CD8-positive, alpha-beta T cell (primary cell): ENCODE measurements at regions of chr16 and their contacts with region 1.

Region 1: DNA sequence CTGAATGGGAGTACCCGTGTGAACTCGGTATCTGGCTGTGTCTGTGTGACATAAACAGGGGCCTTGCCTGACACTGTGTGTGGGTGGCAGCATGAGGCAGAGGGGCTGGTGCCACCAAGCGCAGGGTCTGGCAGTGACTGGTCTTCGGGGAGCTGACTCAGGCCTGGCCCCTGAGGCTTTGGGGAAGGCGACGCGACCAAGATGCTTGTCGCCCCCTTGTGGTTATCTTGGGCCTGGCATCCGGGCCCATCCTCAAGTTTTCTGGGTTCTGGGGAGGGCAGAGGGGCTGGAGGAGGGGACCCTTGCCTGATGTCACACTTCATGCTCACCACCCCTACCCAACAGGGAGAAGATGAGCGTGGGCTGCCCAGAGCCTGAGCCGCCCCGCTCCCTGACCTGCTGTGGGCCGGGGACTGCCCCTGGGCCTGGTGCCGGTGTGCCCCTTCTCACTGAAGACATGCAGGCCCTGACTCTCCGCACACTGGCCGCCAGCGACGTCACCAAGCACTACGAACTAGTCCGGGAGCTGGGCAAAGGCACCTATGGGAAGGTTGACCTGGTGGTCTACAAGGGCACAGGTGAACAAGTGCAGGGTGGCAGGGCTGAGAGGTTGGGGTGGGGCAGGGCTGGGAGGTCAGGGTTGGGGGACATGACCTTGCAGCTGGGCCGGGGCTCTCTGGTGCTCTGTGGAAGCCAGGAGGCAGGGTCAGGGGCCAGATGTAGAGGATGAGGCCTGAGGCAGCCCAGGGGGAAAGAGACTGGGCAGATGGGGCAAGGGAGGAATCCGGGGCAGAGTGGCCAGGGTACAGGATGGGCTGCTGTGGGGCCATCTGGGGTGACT is 24.9 kb downstream of the SBK1 start:
- DNase-seq: peak; percentile 48 to 86 (median 77)
- ATAC-seq: peak; percentile 78
- H3K4me3 ChIP-seq: no peak overlapping the region
- H3K4me3 Mint-ChIP-seq: peak overlapping the region; percentile 41
- H3K27ac ChIP-seq: peak overlapping the region in 1 of 2 experiments; percentile 42
- H3K27ac Mint-ChIP-seq: peak overlapping the region; percentile 84
- H3K4me1 ChIP-seq: peaks cover 48% of the 10 kb centered on the region
- H3K4me1 Mint-ChIP-seq: peaks cover 43% of the 10 kb centered on the region
- H3K27me3 ChIP-seq: no peaks in the 10 kb centered on the region
- H3K27me3 Mint-ChIP-seq: no peaks in the 10 kb centered on the region
- CTCF ChIP-seq: peak; percentile 76

Region 2: DNA sequence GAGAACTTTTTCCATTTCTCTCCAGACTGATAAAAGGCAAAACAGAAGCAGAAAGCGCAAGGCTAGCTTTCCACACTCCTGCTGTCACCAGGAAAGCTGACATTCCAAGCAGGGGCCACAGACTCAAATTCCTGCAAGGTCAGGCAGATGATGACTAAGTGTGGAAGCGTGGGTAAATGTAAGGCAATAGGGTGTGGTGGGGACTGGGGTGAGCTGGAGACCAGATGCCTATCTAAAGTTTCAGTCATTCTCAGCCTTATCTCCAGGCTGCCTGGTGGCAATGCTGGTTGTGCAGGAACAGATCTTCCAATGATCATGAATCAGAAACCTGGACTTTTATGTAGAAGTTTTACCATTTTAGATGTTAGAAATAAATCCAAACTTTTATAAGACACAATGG is 477.8 kb before region 1 on chr16:
- CTCF ChIA-PET with region 1: no interaction called
- POLR2A ChIA-PET with region 1: no interaction called
- intact Hi-C with region 1: no loop called
- DNase-seq: no peak
- ATAC-seq: no peak
- H3K4me3 ChIP-seq: no peak overlapping the region
- H3K4me3 Mint-ChIP-seq: no peak overlapping the region
- H3K27ac ChIP-seq: no peak overlapping the region
- H3K27ac Mint-ChIP-seq: no peak overlapping the region
- H3K4me1 ChIP-seq: no peaks in the 10 kb centered on the region
- H3K4me1 Mint-ChIP-seq: no peaks in the 10 kb centered on the region
- H3K27me3 ChIP-seq: peaks cover 0 to 4% of the 10 kb centered on the region in 2 experiments
- H3K27me3 Mint-ChIP-seq: peaks cover 40% of the 10 kb centered on the region
- CTCF ChIP-seq: no peak

Region 3: GRCh38 chr16:27972500-27972899 is 344.8 kb before region 1 on chr16:
- CTCF ChIA-PET with region 1: no interaction called
- POLR2A ChIA-PET with region 1: no interaction called
- intact Hi-C with region 1: loop called in 1 of 2 experiments (anchors 5 kb)
- DNase-seq: peak in 6 of 9 experiments; percentile 2 to 66 (median 29)
- ATAC-seq: peak; percentile 23
- H3K4me3 ChIP-seq: no peak overlapping the region
- H3K4me3 Mint-ChIP-seq: no peak overlapping the region
- H3K27ac ChIP-seq: no peak overlapping the region
- H3K27ac Mint-ChIP-seq: no peak overlapping the region
- H3K4me1 ChIP-seq: no peaks in the 10 kb centered on the region
- H3K4me1 Mint-ChIP-seq: peaks cover 3% of the 10 kb centered on the region
- H3K27me3 ChIP-seq: no peaks in the 10 kb centered on the region
- H3K27me3 Mint-ChIP-seq: peaks cover 27% of the 10 kb centered on the region
- CTCF ChIP-seq: peak; percentile 37

Region 4: GRCh38 chr16:28218104-28218503 is 99.2 kb before region 1 on chr16:
- CTCF ChIA-PET with region 1: interaction called, 14 read pairs
- POLR2A ChIA-PET with region 1: no interaction called
- intact Hi-C with region 1: loop called in 1 of 2 experiments (anchors 5 kb)
- DNase-seq: peak; percentile 40 to 89 (median 65)
- ATAC-seq: peak; percentile 100
- H3K4me3 ChIP-seq: no peak overlapping the region
- H3K4me3 Mint-ChIP-seq: no peak overlapping the region
- H3K27ac ChIP-seq: no peak overlapping the region
- H3K27ac Mint-ChIP-seq: peak overlapping the region; percentile 71
- H3K4me1 ChIP-seq: no peaks in the 10 kb centered on the region
- H3K4me1 Mint-ChIP-seq: peaks cover 5% of the 10 kb centered on the region
- H3K27me3 ChIP-seq: no peaks in the 10 kb centered on the region
- H3K27me3 Mint-ChIP-seq: no peaks in the 10 kb centered on the region
- CTCF ChIP-seq: peak; percentile 66

Region 5: DNA sequence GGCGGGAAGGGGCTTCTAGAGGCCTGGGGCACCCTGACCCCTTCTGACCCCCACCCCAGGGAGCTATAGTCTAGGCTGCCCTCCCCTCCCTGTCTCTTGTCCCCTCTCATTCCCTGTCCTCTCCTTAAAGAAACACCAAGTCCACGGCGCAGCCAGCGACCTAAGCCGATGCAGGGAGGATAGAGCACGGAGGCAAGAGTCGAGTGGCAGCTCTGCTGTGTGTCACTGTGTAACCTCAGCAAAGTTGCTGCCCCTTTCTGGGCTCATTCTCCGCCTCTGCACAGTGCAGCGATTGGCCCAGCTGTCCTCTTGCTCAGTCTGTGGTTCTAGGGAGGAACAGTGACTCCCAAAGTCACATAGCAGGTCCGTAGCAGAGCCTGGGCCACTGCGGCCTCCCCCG is 61.4 kb before region 1 on chr16:
- CTCF ChIA-PET with region 1: no interaction called
- POLR2A ChIA-PET with region 1: no interaction called
- intact Hi-C with region 1: no loop called
- DNase-seq: no peak
- ATAC-seq: no peak
- H3K4me3 ChIP-seq: no peak overlapping the region
- H3K4me3 Mint-ChIP-seq: no peak overlapping the region
- H3K27ac ChIP-seq: no peak overlapping the region
- H3K27ac Mint-ChIP-seq: no peak overlapping the region
- H3K4me1 ChIP-seq: peaks cover 21% of the 10 kb centered on the region
- H3K4me1 Mint-ChIP-seq: peaks cover 9% of the 10 kb centered on the region
- H3K27me3 ChIP-seq: no peaks in the 10 kb centered on the region
- H3K27me3 Mint-ChIP-seq: no peaks in the 10 kb centered on the region
- CTCF ChIP-seq: no peak

Region 6: DNA sequence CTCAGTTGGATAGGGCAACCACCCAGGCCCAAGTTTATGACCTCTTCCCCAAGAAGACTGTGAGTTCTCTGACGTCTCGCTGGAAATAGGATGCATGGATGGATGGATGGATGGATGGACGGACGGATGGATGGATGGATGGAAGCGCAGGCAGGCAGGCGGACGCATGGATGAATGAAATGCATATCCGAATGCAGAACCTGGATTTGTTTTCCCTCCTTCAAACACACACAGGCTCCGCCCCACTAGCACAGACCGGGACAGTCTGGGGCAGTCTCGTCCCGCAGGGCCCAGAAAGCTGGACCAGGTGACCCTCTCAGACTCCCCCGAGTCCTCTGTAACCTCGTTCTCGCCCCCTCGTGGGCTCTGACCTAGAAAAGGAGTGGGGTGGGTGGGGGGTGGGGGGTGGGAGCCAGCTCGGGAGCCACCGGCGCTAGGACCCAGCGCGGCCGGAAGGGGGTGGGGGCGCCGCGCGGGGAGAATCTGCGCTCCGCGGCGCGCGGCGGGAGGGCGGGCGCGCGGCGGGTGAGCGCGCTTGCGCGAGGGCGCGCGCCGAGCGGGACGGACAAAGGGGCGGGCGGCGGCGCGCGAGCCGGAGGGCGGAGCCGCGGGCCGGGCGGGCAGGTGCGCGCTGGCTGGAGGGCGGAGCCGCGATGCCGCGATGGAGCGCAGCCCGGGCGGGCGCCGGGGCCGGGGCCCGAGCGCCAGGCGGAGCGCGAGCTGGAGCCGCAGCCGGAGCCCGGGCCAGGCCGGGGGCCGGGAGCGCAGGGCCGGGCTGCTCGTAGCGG is 25.2 kb before region 1 on chr16 and contains the start of gene SBK1:
- CTCF ChIA-PET with region 1: interaction called, 431 read pairs
- POLR2A ChIA-PET with region 1: interaction called, 123 read pairs
- intact Hi-C with region 1: loop called in 1 of 2 experiments (anchors 1 kb)
- DNase-seq: peak; percentile 68 to 94 (median 84)
- ATAC-seq: peak; percentile 90
- H3K4me3 ChIP-seq: peak within 1 kb of the TSS; percentile 82 to 92
- H3K4me3 Mint-ChIP-seq: peak within 1 kb of the TSS; percentile 94
- H3K27ac ChIP-seq: peak within 1 kb of the TSS; percentile 56 to 75
- H3K27ac Mint-ChIP-seq: peak within 1 kb of the TSS; percentile 93
- H3K4me1 ChIP-seq: peaks cover 74% of the 10 kb centered on the region
- H3K4me1 Mint-ChIP-seq: peaks cover 67% of the 10 kb centered on the region
- H3K27me3 ChIP-seq: no peaks in the 10 kb centered on the region
- H3K27me3 Mint-ChIP-seq: no peaks in the 10 kb centered on the region
- CTCF ChIP-seq: no peak
- total RNA-seq, gene SBK1: 16.5 to 17.1 TPM

Region 7: GRCh38 chr16:28297784-28298510 is 19.3 kb before region 1 on chr16:
- CTCF ChIA-PET with region 1: interaction called, 85 read pairs
- POLR2A ChIA-PET with region 1: interaction called, 123 read pairs
- intact Hi-C with region 1: no loop called
- DNase-seq: peak in 3 of 9 experiments; percentile 22 to 50 (median 40)
- ATAC-seq: peak; percentile 35
- H3K4me3 ChIP-seq: peak overlapping the region in 1 of 2 experiments; percentile 22
- H3K4me3 Mint-ChIP-seq: peak overlapping the region; percentile 70
- H3K27ac ChIP-seq: peak overlapping the region in 1 of 2 experiments; percentile 51
- H3K27ac Mint-ChIP-seq: peak overlapping the region; percentile 96
- H3K4me1 ChIP-seq: peaks cover 91% of the 10 kb centered on the region
- H3K4me1 Mint-ChIP-seq: peaks cover 80% of the 10 kb centered on the region
- H3K27me3 ChIP-seq: no peaks in the 10 kb centered on the region
- H3K27me3 Mint-ChIP-seq: no peaks in the 10 kb centered on the region
- CTCF ChIP-seq: no peak

Region 8: GRCh38 chr16:28304214-28304613 is 13.0 kb before region 1 on chr16:
- CTCF ChIA-PET with region 1: interaction called, 85 read pairs
- POLR2A ChIA-PET with region 1: interaction called, 123 read pairs
- intact Hi-C with region 1: loop called in 1 of 2 experiments (anchors 1 kb)
- DNase-seq: peak in 1 of 9 experiments; percentile 21
- ATAC-seq: peak; percentile 54
- H3K4me3 ChIP-seq: no peak overlapping the region
- H3K4me3 Mint-ChIP-seq: no peak overlapping the region
- H3K27ac ChIP-seq: no peak overlapping the region
- H3K27ac Mint-ChIP-seq: no peak overlapping the region
- H3K4me1 ChIP-seq: peaks cover 60% of the 10 kb centered on the region
- H3K4me1 Mint-ChIP-seq: peaks cover 68% of the 10 kb centered on the region
- H3K27me3 ChIP-seq: no peaks in the 10 kb centered on the region
- H3K27me3 Mint-ChIP-seq: no peaks in the 10 kb centered on the region
- CTCF ChIP-seq: no peak

Region 9: DNA sequence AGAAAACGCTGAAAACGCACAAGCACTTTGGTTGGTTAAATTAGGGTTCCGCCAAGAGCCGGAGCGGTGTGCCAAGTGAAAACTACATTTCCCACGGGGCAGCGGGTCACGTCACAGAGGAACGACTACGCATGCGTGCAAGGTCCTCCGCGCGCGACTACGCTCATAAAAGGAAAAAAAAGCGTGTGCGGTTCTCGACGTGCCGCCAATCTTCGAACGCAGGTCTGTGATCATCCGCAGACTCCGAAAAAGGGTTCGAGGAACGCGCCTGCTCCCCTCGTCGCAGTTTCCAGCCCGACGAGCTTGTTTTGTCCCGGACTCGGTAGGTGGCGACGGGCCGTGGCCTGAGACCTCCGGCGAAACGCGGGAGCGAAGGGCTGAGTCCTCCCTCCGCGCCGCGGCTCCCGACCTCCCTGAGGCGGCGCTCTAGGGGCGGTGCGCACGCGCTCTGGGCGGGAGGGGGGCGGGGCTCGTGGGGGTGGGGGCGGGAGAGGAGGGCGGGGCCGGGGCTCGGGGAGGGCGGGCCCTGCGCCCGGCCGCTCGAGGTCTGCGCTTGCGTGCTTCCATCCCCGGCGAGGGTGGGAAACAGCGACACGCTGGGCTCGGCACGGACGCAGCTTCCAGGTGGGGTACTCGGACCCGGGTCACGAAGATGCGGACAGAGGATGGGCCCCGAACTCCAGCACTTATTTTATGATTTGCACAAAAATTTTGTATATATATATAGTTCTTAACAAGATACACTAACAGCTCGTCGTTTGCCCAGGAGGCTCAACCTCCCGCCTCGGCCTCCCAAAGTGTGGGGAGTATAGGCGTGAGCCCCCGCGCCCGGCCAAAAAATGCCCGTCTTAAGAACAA is 236.7 kb after region 1 on chr16 and contains the start of gene SGF29:
- CTCF ChIA-PET with region 1: no interaction called
- POLR2A ChIA-PET with region 1: no interaction called
- intact Hi-C with region 1: loop called in 1 of 2 experiments (anchors 5 kb)
- DNase-seq: peak; percentile 86 to 97 (median 93)
- ATAC-seq: peak; percentile 93
- H3K4me3 ChIP-seq: peak within 1 kb of the TSS; percentile 87 to 99
- H3K4me3 Mint-ChIP-seq: peak within 1 kb of the TSS; percentile 92
- H3K27ac ChIP-seq: peak within 1 kb of the TSS; percentile 95 to 98
- H3K27ac Mint-ChIP-seq: peak within 1 kb of the TSS; percentile 98
- H3K4me1 ChIP-seq: peaks cover 18% of the 10 kb centered on the region
- H3K4me1 Mint-ChIP-seq: peaks cover 36% of the 10 kb centered on the region
- H3K27me3 ChIP-seq: no peaks in the 10 kb centered on the region
- H3K27me3 Mint-ChIP-seq: no peaks in the 10 kb centered on the region
- CTCF ChIP-seq: no peak
- total RNA-seq, gene SGF29: 41.1 to 44.5 TPM